ENCODE measurements at regions of chr3 and their contacts with region 1.

Region 1: GRCh38 chr3:15726043-15726442 is 71.7 kb downstream of the ANKRD28 start:
- DNase-seq: peak; percentile 60
- ATAC-seq: peak; percentile 93
- H3K4me3 ChIP-seq: no peak overlapping the region
- H3K27ac ChIP-seq: peak overlapping the region; percentile 71
- H3K4me1 ChIP-seq: peaks cover 18% of the 10 kb centered on the region
- H3K27me3 ChIP-seq: no peaks in the 10 kb centered on the region
- CTCF ChIP-seq: no peak
- EP300 ChIP-seq: no peak
- POLR2A ChIP-seq: no peak
- RAD21 ChIP-seq: no peak

Region 2: GRCh38 chr3:15781637-15782402 is 55.8 kb after region 1 on chr3:
- CTCF ChIA-PET with region 1: interaction called, 10 read pairs
- POLR2A ChIA-PET with region 1: no interaction called
- RAD21 ChIA-PET with region 1: no interaction called
- SMC1A ChIA-PET with region 1: interaction called, 13 read pairs
- in situ Hi-C with region 1: no loop called
- intact Hi-C with region 1: no loop called
- DNase-seq: no peak
- ATAC-seq: no peak
- H3K4me3 ChIP-seq: no peak overlapping the region
- H3K27ac ChIP-seq: no peak overlapping the region
- H3K4me1 ChIP-seq: no peaks in the 10 kb centered on the region
- H3K27me3 ChIP-seq: no peaks in the 10 kb centered on the region
- CTCF ChIP-seq: no peak
- EP300 ChIP-seq: no peak
- POLR2A ChIP-seq: no peak
- RAD21 ChIP-seq: no peak

Measured in GM12878 (cell line).